Heart left ventricle (tissue), 16 donors: ENCODE measurements at regions of chr7 and their contacts with region 1.

Region 1: DNA sequence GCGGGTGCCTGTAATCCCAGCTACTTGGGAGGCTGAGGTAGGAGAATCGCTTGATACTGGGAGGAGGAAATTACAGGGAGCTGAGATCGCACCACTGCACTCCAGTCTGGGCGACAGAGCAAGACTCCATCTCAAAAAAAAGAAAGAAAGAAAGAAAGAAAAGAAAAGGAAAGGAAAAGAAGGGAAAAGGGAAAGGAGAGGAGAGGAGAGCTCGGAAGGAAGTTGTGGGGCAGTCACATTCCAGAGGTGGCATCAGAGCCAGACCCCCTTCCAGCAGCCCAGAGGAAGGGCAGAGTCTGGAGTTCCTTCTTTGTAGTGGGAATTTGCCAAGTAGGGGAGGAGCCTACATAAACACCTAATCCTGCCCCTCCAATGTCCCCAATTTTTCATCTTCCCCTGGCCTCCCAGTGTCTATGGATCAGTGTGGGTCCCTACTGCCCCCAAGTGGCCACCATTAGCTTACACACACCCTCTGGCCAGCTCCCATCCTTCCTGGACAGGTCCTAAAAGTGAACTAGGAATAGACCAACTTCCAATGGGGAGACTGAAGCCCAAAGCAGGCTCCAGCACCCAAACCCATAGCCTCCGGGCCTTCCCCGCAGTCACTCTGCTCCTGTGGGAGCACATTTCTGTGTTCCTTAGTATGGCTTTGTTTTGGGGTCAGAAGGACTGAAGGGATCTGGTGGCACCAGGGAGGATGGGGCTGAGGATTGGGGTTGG is 39.6 kb upstream of the HSPB1 start:
- DNase-seq: peak in 1 of 5 donors; percentile 54
- ATAC-seq: peak; percentile 67 to 91 (median 80)
- H3K4me3 ChIP-seq: no peak overlapping the region
- H3K27ac ChIP-seq: no peak overlapping the region
- H3K4me1 ChIP-seq: peaks cover 0 to 21% (median 7%) of the 10 kb centered on the region in 12 donors
- H3K27me3 ChIP-seq: peaks cover 19 to 44% (median 36%) of the 10 kb centered on the region in 9 donors
- CTCF ChIP-seq: peak; percentile 31 to 70 (median 56)
- POLR2A ChIP-seq: no peak

Region 2: DNA sequence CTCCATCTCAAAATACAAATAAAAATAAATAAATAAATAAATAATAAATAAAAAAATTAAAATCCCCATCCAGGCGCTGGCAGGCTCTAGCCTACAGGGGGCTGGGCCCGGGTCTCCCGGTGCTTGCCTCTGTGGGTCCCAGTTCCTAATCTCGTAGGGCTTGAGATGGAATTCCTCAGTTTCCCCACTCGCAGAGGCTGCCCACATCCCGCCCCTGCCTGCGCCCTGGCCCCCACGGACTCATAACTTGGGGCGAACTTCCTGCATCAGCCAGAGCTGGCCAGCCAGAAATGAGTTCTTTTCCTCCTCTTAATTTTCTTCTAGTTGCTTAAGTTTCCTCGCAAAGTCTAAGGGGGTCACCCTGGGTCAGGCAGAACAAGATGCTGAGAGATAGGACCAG is 83.2 kb before region 1 on chr7:
- intact Hi-C with region 1: loop called in 8 of 10 experiments (anchors 2 to 10 kb)
- DNase-seq: peak in 1 of 5 donors; percentile 20
- ATAC-seq: no peak
- H3K4me3 ChIP-seq: no peak overlapping the region
- H3K27ac ChIP-seq: no peak overlapping the region
- H3K4me1 ChIP-seq: peaks cover 0 to 8% (median 0%) of the 10 kb centered on the region in 12 donors
- H3K27me3 ChIP-seq: no peaks in the 10 kb centered on the region
- CTCF ChIP-seq: no peak
- POLR2A ChIP-seq: no peak

Region 3: GRCh38 chr7:76185187-76185896 is 77.5 kb before region 1 on chr7:
- intact Hi-C with region 1: loop called in 2 of 10 experiments (anchors 5 to 10 kb)
- DNase-seq: no peak
- ATAC-seq: peak in 2 of 4 donors; percentile 13 to 27
- H3K4me3 ChIP-seq: no peak overlapping the region
- H3K27ac ChIP-seq: no peak overlapping the region
- H3K4me1 ChIP-seq: no peaks in the 10 kb centered on the region
- H3K27me3 ChIP-seq: no peaks in the 10 kb centered on the region
- CTCF ChIP-seq: no peak
- POLR2A ChIP-seq: no peak

Region 4: GRCh38 chr7:76191783-76192275 is 71.0 kb before region 1 on chr7:
- intact Hi-C with region 1: loop called in 2 of 10 experiments (anchors 5 to 10 kb)
- DNase-seq: no peak
- ATAC-seq: no peak
- H3K4me3 ChIP-seq: no peak overlapping the region
- H3K27ac ChIP-seq: no peak overlapping the region
- H3K4me1 ChIP-seq: no peaks in the 10 kb centered on the region
- H3K27me3 ChIP-seq: peaks cover 0 to 10% (median 0%) of the 10 kb centered on the region in 9 donors
- CTCF ChIP-seq: no peak
- POLR2A ChIP-seq: no peak